ENCODE measurements at regions of chr4 and their contacts with region 1.

Region 1: GRCh38 chr4:9880406-9881197 is 99.2 kb downstream of the DRD5 start:
- DNase-seq: no peak
- ATAC-seq: no peak
- H3K4me3 ChIP-seq: no peak overlapping the region
- H3K4me3 Mint-ChIP-seq: no peak overlapping the region
- H3K27ac ChIP-seq: no peak overlapping the region
- H3K27ac Mint-ChIP-seq: no peak overlapping the region
- H3K4me1 ChIP-seq: no peaks in the 10 kb centered on the region
- H3K4me1 Mint-ChIP-seq: no peaks in the 10 kb centered on the region
- H3K27me3 ChIP-seq: peaks cover 0 to 9% of the 10 kb centered on the region in 2 experiments
- H3K27me3 Mint-ChIP-seq: peaks cover 0 to 4% of the 10 kb centered on the region in 2 donors

Region 2: DNA sequence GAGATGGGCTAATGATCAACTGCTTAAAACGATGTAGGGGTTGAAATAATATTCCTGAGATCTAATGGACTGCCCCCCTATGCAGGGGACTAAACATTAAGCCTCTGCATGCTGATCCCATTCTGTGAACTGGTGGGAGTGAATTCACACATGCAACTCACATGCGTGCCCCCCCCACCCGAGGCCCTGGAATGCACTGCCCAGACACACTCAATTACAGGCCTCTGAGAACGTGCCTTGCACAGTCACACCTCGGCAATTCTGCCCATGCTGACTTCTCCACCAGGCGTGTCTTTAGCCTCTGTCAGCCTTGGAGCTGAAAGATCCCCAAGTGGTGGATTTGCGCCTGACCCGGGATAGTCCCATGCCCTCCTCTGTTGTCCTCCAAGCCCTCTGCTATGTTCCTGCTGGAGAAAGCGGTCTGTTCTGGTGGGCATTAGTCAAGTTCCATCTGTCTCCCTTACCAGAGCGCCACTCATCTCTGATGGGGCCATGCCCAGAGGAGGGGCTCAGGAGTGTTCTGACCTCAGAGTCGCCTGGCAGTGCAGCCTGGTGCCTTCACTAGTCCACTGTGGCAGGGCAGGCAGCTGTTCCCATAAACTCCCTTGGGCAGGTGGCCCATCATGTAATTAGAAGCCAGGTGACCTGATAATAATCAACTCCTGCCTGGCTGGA is 12.7 kb before region 1 on chr4:
- CTCF ChIA-PET with region 1: no interaction called
- POLR2A ChIA-PET with region 1: no interaction called
- DNase-seq: no peak
- ATAC-seq: no peak
- H3K4me3 ChIP-seq: no peak overlapping the region
- H3K4me3 Mint-ChIP-seq: no peak overlapping the region
- H3K27ac ChIP-seq: no peak overlapping the region
- H3K27ac Mint-ChIP-seq: no peak overlapping the region
- H3K4me1 ChIP-seq: no peaks in the 10 kb centered on the region
- H3K4me1 Mint-ChIP-seq: no peaks in the 10 kb centered on the region
- H3K27me3 ChIP-seq: peaks cover 0 to 4% of the 10 kb centered on the region in 2 experiments
- H3K27me3 Mint-ChIP-seq: no peaks in the 10 kb centered on the region

Region 3: DNA sequence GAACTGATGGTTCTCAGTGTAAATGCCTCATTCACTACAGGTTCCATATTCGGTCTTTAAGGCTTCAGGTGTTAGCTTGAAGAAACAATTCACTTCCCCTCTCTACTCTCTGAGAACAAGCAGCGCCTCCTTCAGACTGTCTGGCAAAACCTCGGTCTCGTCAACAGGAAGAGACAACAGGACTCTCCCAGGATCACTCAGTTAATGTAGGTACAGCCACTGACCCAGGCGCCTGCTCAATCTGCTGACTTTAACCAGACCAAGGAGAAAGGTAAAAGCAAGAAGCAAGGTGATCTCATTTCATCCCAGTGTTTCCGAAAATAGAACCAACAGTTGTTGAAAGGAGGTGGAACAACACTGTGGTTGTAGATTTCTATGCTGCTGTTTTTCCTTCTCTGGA is 38.4 kb after region 1 on chr4:
- CTCF ChIA-PET with region 1: interaction called in 1 of 2 experiments, 13 read pairs
- POLR2A ChIA-PET with region 1: no interaction called
- DNase-seq: no peak
- ATAC-seq: no peak
- H3K4me3 ChIP-seq: no peak overlapping the region
- H3K4me3 Mint-ChIP-seq: no peak overlapping the region
- H3K27ac ChIP-seq: no peak overlapping the region
- H3K27ac Mint-ChIP-seq: no peak overlapping the region
- H3K4me1 ChIP-seq: no peaks in the 10 kb centered on the region
- H3K4me1 Mint-ChIP-seq: no peaks in the 10 kb centered on the region
- H3K27me3 ChIP-seq: peaks cover 0 to 5% of the 10 kb centered on the region in 2 experiments
- H3K27me3 Mint-ChIP-seq: no peaks in the 10 kb centered on the region

Region 4: GRCh38 chr4:11139871-11140270 is 1259.3 kb after region 1 on chr4:
- CTCF ChIA-PET with region 1: no interaction called
- POLR2A ChIA-PET with region 1: no interaction called
- DNase-seq: no peak
- ATAC-seq: no peak
- H3K4me3 ChIP-seq: no peak overlapping the region
- H3K4me3 Mint-ChIP-seq: no peak overlapping the region
- H3K27ac ChIP-seq: no peak overlapping the region
- H3K27ac Mint-ChIP-seq: no peak overlapping the region
- H3K4me1 ChIP-seq: no peaks in the 10 kb centered on the region
- H3K4me1 Mint-ChIP-seq: peaks cover 0 to 4% (median 0%) of the 10 kb centered on the region in 3 donors
- H3K27me3 ChIP-seq: no peaks in the 10 kb centered on the region
- H3K27me3 Mint-ChIP-seq: no peaks in the 10 kb centered on the region

Measured in T-cell (primary cell).